Astrocyte of the cerebellum (primary cell): ENCODE measurements at regions of chr18 and their contacts with region 1.

Region 1: DNA sequence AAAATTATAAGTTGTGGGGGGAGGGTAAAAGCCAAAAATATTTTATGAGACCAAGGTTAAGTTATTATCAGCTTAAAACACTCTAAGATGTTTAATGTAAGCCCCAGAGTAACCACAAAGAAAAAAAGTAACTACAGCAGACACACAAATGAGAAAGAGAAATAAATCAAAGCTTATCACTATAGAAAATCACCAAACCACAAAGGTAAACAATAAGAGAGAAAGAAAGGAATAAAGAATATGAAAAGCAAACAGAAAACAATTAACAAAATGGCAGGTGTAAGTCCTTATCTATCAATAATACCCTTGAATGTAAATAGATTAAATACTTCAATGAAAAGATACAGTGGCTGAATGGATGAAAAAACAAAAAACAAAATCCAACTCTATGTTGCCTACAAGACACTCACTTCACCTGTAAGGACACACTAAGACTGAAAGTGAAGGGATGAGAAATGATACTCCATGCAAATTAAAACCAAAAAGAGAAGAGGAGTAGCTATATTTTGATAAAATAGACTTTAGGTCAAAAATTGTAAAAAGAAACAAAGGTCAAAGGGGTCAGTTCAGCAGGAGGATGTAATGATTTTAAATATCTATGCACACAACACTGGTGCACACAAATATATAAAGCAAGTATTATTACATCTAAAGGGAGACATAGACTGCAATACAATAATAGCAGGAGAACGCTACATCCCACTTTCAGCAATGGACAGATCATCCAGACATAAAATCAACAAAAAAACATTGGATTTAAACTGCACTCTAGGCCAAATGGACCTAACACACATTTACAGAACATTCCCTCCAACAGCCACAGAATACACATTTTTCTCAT is 80.7 kb downstream of the PTPN2 start:
- DNase-seq: no peak
- H3K4me3 ChIP-seq: no peak overlapping the region
- CTCF ChIP-seq: no peak

Region 2: DNA sequence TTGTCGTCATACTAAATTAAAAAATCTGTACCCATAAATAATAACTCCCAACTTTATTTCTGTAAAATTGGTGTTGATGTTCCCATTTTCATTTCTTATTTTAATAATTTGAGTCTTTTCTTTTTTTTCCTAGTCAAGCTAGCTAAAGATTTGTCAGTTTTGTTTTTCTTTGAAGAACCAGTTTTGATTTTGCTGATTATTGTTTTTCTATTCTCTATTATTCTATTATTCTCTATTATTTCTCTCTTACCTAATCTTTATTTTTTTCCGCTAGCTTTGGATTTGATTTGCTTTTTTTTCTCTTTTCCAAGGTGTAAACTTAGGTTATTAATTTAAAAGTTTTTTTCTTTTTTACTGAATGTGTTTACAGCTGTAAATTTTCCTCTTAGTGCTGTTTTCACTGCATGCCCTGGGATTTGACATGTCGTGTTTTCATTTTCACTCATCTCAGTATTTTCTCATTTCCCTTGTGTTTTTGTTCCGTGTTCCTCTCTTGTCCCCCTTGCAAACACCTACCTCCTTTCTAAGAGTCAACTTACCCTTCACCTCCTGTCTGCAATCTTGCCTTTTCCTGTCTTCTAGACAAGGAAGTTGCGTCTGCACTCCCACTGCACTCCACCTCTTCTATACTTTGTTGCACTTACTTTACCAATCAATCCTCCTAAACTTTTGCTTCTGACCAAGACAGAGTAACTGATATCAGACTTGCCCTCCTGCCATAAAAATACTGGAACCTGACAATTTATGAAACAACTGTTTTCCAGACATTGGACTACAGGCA is 81.6 kb before region 1 on chr18:
- in situ Hi-C with region 1: no loop called
- DNase-seq: no peak
- H3K4me3 ChIP-seq: no peak overlapping the region
- CTCF ChIP-seq: no peak

Region 3: GRCh38 chr18:12768625-12769024 is 34.7 kb before region 1 on chr18:
- in situ Hi-C with region 1: no loop called
- DNase-seq: no peak
- H3K4me3 ChIP-seq: no peak overlapping the region
- CTCF ChIP-seq: no peak

Region 4: GRCh38 chr18:12895014-12895413 is 91.7 kb after region 1 on chr18:
- in situ Hi-C with region 1: loop called (anchors 5 kb)
- DNase-seq: no peak
- H3K4me3 ChIP-seq: no peak overlapping the region
- CTCF ChIP-seq: no peak